Calu3 (cell line): ENCODE measurements at regions of chr2 and their contacts with region 1.

Region 1: DNA sequence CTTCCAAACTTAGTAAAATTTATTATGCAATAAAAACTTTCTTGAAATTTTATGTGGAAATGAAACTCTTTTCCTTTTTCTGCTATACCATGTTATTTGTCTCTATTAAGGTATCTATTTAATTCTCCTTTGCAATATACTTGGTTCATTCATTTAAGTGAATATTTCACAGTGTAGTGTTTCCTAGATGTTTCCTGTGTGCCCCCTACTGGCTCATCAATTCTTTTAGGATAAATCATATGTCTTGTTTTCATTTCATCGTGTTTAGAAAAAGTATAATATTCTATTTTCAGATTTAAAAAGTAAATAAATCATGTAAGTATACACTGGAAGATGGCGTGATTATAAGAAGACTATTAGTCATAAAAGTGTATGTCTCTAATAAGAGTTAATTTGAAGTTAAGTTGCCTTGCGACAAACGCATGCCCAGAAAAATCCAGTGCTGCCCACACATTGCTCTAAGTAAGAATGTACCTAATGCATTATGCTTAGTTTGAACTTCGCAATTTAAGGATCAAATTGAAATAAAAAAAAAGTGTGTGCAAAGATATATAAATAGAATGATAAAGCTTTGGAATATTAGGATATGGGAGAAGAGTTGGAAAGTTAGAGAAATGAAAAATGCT is 525.4 kb downstream of the KCNJ3 start:
- DNase-seq: peak; percentile 6
- H3K4me3 Mint-ChIP-seq: no peak overlapping the region
- H3K27ac Mint-ChIP-seq: no peak overlapping the region
- H3K4me1 Mint-ChIP-seq: no peaks in the 10 kb centered on the region
- H3K27me3 Mint-ChIP-seq: no peaks in the 10 kb centered on the region
- CTCF ChIP-seq: peak; percentile 51

Region 2: GRCh38 chr2:154439156-154439555 is 784.7 kb before region 1 on chr2:
- CTCF ChIA-PET with region 1: no interaction called
- intact Hi-C with region 1: loop called (anchors 2 kb)
- DNase-seq: no peak
- H3K4me3 Mint-ChIP-seq: no peak overlapping the region
- H3K27ac Mint-ChIP-seq: no peak overlapping the region
- H3K4me1 Mint-ChIP-seq: no peaks in the 10 kb centered on the region
- H3K27me3 Mint-ChIP-seq: no peaks in the 10 kb centered on the region
- CTCF ChIP-seq: no peak

Region 3: GRCh38 chr2:154452906-154453493 is 770.9 kb before region 1 on chr2:
- CTCF ChIA-PET with region 1: no interaction called
- intact Hi-C with region 1: loop called (anchors 5 kb)
- DNase-seq: no peak
- H3K4me3 Mint-ChIP-seq: no peak overlapping the region
- H3K27ac Mint-ChIP-seq: no peak overlapping the region
- H3K4me1 Mint-ChIP-seq: no peaks in the 10 kb centered on the region
- H3K27me3 Mint-ChIP-seq: no peaks in the 10 kb centered on the region
- CTCF ChIP-seq: peak; percentile 32